A549 (cell line): ENCODE measurements at regions of chr11 and their contacts with region 1.

Region 1: DNA sequence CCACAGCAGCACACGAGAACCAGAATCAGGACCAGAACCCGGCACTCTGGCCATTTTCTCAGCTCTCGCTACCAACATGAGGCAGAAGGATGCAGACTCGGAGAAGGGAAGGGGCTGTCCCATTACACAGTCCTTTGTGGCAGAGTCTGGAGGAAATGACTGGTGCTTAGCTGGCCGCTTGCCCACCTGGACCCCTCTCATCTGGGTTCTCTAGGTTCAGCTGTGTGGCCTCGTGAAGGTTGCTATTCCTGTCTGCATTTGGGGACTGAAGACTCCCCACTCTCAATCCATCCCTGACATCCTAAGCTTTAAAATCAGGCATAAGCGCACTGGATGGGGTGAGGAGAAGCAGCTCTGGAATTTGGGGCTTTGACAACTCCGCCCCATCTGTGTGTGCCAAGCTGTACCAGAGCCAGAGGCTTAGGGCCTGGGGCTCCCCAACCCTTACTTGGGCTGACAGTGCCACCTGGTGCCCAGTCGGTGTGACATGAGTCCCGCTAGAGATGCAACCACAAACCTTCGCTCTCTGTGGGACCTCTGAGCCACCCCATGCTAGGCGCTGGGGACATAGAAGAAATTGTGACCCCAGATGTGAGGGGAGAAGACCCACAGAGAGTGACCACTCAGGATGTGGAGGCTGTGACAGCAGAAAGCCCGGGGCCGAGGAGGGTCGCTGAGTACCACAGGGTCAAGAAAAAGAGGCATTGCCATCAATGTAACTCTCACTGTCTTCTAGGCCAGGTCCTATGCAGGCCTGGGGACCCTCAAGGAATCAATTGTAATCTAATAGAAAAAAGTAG is 35.9 kb upstream of the FCHSD2 start:
- DNase-seq: peak; percentile 70 to 91
- ATAC-seq: peak; percentile 95 to 96
- H3K4me3 ChIP-seq: no peak overlapping the region
- H3K27ac ChIP-seq: no peak overlapping the region
- H3K4me1 ChIP-seq: no peaks in the 10 kb centered on the region
- CTCF ChIP-seq: peak; percentile 84
- EP300 ChIP-seq: no peak
- POLR2A ChIP-seq: no peak
- RAD21 ChIP-seq: peak; percentile 96 to 97

Region 2: GRCh38 chr11:72722050-72722748 is 455.8 kb before region 1 on chr11:
- CTCF ChIA-PET with region 1: interaction called, 64 read pairs
- POLR2A ChIA-PET with region 1: no interaction called
- DNase-seq: peak; percentile 87 to 97
- ATAC-seq: peak; percentile 95 to 97
- H3K4me3 ChIP-seq: peak overlapping the region; percentile 45
- H3K27ac ChIP-seq: peak overlapping the region; percentile 94 to 97
- H3K4me1 ChIP-seq: peaks cover 35% of the 10 kb centered on the region
- CTCF ChIP-seq: no peak
- EP300 ChIP-seq: no peak
- POLR2A ChIP-seq: peak; percentile 54
- RAD21 ChIP-seq: no peak

Region 3: GRCh38 chr11:72840780-72841179 is 337.2 kb before region 1 on chr11:
- CTCF ChIA-PET with region 1: interaction called, 339 read pairs
- POLR2A ChIA-PET with region 1: no interaction called
- DNase-seq: peak in 1 of 2 experiments; percentile 35
- ATAC-seq: no peak; a peak in 1 of 6 replicates
- H3K4me3 ChIP-seq: no peak overlapping the region
- H3K27ac ChIP-seq: peak overlapping the region; percentile 6 to 66; a peak in 5 of 6 replicates
- H3K4me1 ChIP-seq: peaks cover 8% of the 10 kb centered on the region; the same call in 1 of the 3 replicates
- CTCF ChIP-seq: no peak
- EP300 ChIP-seq: no peak
- POLR2A ChIP-seq: no peak
- RAD21 ChIP-seq: no peak

Region 4: DNA sequence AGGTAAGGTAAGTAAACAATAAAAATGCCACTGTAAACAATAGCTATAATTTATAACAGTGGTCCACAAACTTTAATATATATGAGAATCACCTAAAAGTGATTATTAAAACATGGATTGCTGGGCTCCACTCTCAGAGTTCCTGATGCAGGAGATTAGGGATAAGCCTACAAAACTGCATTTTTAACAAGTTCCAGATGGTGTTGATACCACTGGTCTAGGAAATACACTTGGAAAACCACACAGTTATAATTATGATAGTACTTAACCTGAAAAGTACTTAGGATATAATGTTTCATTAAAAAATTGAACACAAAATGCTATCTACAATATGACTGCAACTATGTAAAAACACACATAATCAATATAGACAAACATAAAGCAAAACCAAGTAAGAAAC is 56.3 kb before region 1 on chr11:
- CTCF ChIA-PET with region 1: interaction called, 12 read pairs
- POLR2A ChIA-PET with region 1: no interaction called
- DNase-seq: no peak
- ATAC-seq: no peak
- H3K4me3 ChIP-seq: no peak overlapping the region
- H3K27ac ChIP-seq: no peak overlapping the region
- H3K4me1 ChIP-seq: no peaks in the 10 kb centered on the region
- CTCF ChIP-seq: no peak
- EP300 ChIP-seq: no peak
- POLR2A ChIP-seq: no peak
- RAD21 ChIP-seq: no peak

Region 5: DNA sequence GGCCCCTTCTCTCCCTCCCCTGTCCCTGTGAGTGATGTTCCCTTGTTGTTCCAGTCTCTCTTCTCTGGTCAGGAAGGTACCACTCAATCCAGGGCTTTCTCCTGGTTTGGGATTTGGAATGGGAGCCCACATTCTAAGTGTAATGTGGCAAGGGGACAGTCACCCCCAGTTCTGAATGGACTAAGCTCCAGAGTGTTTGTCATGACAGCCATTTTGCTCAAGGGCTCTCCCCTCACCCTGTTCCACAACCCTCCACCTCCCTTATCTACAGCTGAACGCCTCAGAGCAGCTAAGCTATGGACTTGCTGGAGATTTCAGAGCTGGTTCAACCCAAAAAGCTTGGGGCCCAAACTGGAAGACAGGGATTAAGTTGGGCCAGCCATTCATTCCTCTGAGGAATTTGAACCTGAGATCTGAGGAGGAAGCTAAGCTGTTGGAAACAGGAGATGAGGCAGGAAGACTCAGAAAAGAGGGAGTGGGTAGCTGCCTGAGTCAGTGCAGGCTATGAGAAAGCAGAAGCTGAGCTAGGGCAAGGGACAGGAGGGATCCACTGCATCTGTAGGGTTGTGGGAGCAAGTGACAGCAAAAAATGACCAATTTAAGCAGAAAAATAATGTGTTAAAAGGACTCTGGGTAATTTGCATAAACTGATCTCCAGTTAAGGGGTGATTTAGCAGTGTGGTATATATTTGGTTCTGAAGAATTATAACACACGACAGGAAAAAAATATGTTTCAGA is 13.0 kb before region 1 on chr11:
- CTCF ChIA-PET with region 1: interaction called, 50 read pairs
- POLR2A ChIA-PET with region 1: no interaction called
- DNase-seq: no peak
- ATAC-seq: no peak
- H3K4me3 ChIP-seq: no peak overlapping the region
- H3K27ac ChIP-seq: no peak overlapping the region
- H3K4me1 ChIP-seq: no peaks in the 10 kb centered on the region
- CTCF ChIP-seq: no peak
- EP300 ChIP-seq: no peak
- POLR2A ChIP-seq: no peak
- RAD21 ChIP-seq: no peak

Region 6: GRCh38 chr11:73236854-73237253 is 58.9 kb after region 1 on chr11:
- CTCF ChIA-PET with region 1: interaction called, 80 read pairs
- POLR2A ChIA-PET with region 1: no interaction called
- DNase-seq: peak; percentile 63 to 69
- ATAC-seq: peak; percentile 46 to 80; a peak in 4 of 6 replicates
- H3K4me3 ChIP-seq: no peak overlapping the region
- H3K27ac ChIP-seq: no peak overlapping the region
- H3K4me1 ChIP-seq: peaks cover 13% of the 10 kb centered on the region; the same call in 2 of the 3 replicates
- CTCF ChIP-seq: peak; percentile 52
- EP300 ChIP-seq: no peak
- POLR2A ChIP-seq: no peak
- RAD21 ChIP-seq: peak; percentile 46 to 72